ENCODE measurements at regions of chr22 and their contacts with region 1.

Region 1: GRCh38 chr22:27748751-27749191 is 52.8 kb downstream of the MN1 start:
- DNase-seq: peak in 1 of 2 experiments; percentile 72
- H3K4me3 ChIP-seq: peak overlapping the region in 1 of 4 experiments; percentile 35; a peak in 4 of 8 replicates
- H3K27ac ChIP-seq: no peak overlapping the region
- H3K4me1 ChIP-seq: peaks cover 11 to 37% (median 24%) of the 10 kb centered on the region in 4 experiments
- H3K27me3 ChIP-seq: peaks cover 0 to 3% (median 0%) of the 10 kb centered on the region in 4 experiments; a peak in 1 of 7 replicates
- CTCF ChIP-seq: no peak
- EP300 ChIP-seq: no peak
- POLR2A ChIP-seq: no peak
- RAD21 ChIP-seq: peak; percentile 2 to 25; a peak in 1 of 4 replicates

Region 2: DNA sequence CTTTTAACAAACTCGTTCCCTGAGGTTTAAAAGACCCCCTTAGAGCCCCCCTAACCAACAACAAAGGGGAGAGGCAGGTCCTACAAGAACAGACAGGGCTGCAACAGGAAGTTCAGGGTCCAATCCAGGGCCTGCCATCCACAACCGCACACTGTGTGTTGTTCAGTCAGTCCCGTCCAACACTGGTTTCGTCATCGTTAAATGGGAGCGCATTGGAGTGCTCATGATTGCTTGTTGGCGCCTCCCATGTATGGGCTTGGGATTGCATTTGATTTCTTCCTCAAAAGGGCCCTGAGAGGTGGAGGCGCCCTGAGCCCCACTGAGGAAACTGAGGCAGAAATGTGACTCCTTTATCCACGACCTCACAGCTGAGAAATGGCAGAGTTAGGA is 121.3 kb before region 1 on chr22:
- CTCF ChIA-PET with region 1: no interaction called
- POLR2A ChIA-PET with region 1: no interaction called
- DNase-seq: no peak
- H3K4me3 ChIP-seq: no peak overlapping the region
- H3K27ac ChIP-seq: no peak overlapping the region
- H3K4me1 ChIP-seq: peaks cover 6 to 20% (median 10%) of the 10 kb centered on the region in 4 experiments
- H3K27me3 ChIP-seq: no peaks in the 10 kb centered on the region
- CTCF ChIP-seq: peak; percentile 34 to 65 (median 59); a peak in 3 of 4 replicates
- EP300 ChIP-seq: no peak
- POLR2A ChIP-seq: no peak
- RAD21 ChIP-seq: peak; percentile 56 to 61

Region 3: DNA sequence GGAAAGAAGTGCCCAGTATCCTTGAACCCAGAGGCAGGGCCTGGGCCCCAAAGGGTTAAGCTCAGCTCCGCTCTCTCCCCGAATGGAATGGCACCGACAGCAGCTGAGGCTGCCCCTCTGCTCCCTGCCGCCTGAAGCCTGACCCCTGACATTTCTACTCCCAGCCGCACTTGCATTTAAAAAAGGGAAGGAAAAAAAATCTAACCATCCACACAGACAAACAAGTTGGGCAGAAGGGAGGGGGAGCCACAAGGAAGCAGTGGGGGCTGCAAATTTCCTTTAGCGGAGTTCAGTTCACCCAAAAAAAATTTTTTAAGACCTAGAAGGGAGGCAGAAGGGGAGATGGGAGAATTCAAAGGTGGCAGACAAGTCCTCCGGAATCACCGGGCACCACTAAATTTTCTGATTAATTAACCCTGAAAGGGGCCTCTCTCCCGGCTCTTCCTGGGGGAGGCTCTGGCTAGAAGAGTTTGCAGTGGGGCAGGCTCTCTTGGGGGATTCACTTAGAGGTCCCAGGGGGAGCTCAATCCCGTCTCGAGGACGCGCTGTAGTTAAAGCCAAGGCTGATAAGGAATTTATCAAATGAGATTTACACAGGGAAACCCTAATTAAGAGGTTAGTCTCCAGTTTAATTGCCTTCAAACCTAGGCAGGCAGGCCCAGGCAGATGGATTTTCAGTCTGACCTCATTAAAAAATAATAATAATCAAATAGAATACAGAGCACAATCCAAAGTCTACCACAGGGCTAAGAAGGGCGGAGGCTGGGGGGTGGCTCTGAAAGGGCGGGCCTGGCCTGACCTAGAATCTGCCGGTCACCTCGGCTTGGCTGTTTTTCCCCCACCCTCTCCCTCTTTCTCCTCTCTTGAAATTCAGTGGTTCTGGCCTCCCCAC is 27.2 kb after region 1 on chr22:
- CTCF ChIA-PET with region 1: interaction called, 13 read pairs
- POLR2A ChIA-PET with region 1: interaction called, 5 read pairs
- DNase-seq: no peak
- H3K4me3 ChIP-seq: peak overlapping the region in 2 of 4 experiments; percentile 16 to 49; a peak in 4 of 8 replicates
- H3K27ac ChIP-seq: no peak overlapping the region
- H3K4me1 ChIP-seq: peaks cover 15 to 34% (median 24%) of the 10 kb centered on the region in 4 experiments
- H3K27me3 ChIP-seq: no peaks in the 10 kb centered on the region; a peak in 1 of 7 replicates
- CTCF ChIP-seq: no peak
- EP300 ChIP-seq: no peak
- POLR2A ChIP-seq: no peak
- RAD21 ChIP-seq: no peak; a peak in 1 of 4 replicates

Measured in H1 (cell line).